Activated naive CD4-positive, alpha-beta T cell treated with anti-CD3 and anti-CD28 coated beads for 36 hours (primary cell): ENCODE measurements at regions of chr10 and their contacts with region 1.

Region 1: GRCh38 chr10:4651404-4652037 is 174.5 kb upstream of the AKR1E2 start:
- DNase-seq: peak; percentile 41
- H3K4me3 Mint-ChIP-seq: peak overlapping the region; percentile 10
- H3K27ac Mint-ChIP-seq: peak overlapping the region; percentile 84
- H3K4me1 Mint-ChIP-seq: peaks cover 43% of the 10 kb centered on the region
- H3K27me3 Mint-ChIP-seq: no peaks in the 10 kb centered on the region

Region 2: DNA sequence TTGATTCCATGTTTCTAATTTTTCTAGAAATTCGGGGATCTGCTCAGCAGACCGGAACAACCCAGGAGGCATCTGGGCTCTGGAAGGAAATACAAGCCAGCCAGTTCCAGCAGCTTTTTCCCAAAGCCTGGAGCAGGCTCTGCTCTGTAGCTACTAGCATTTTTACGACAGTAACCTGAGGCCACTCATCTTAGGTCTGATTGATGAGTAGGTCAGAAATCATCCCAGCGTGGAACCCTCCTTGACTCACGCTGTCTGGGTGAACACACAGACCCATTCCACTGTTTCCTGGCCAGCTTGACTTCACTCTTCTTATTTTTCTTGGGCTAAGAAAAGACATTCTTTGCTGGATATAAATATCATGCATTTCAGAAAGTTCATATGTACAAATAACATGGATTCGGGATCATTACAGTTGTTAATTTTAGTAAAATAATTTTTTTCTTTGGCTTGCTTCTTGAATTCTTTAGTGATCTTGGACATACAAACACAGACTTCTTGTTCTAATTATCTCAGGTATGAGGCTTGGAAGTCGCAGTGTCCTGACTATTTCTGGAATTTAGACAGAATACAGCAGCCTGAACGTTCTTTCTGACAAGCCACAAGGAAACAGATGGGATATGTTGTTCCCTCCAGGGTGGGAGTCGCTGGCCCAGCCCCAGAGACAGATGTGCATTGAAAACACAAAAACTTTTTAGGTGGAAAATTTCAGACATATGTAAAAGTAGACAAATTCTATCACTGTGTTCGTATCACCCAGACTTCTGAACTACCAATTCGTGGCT is 1424.4 kb before region 1 on chr10:
- CTCF ChIA-PET with region 1: no interaction called
- intact Hi-C with region 1: loop called (anchors 2 kb)
- DNase-seq: no peak
- H3K4me3 Mint-ChIP-seq: no peak overlapping the region
- H3K27ac Mint-ChIP-seq: no peak overlapping the region
- H3K4me1 Mint-ChIP-seq: peaks cover 22% of the 10 kb centered on the region
- H3K27me3 Mint-ChIP-seq: peaks cover 2% of the 10 kb centered on the region

Region 3: GRCh38 chr10:3805791-3806461 is 845.6 kb before region 1 on chr10:
- CTCF ChIA-PET with region 1: no interaction called
- intact Hi-C with region 1: loop called (anchors 2 kb)
- DNase-seq: peak; percentile 45
- H3K4me3 Mint-ChIP-seq: peak overlapping the region; percentile 10
- H3K27ac Mint-ChIP-seq: no peak overlapping the region
- H3K4me1 Mint-ChIP-seq: peaks cover 73% of the 10 kb centered on the region
- H3K27me3 Mint-ChIP-seq: no peaks in the 10 kb centered on the region

Region 4: DNA sequence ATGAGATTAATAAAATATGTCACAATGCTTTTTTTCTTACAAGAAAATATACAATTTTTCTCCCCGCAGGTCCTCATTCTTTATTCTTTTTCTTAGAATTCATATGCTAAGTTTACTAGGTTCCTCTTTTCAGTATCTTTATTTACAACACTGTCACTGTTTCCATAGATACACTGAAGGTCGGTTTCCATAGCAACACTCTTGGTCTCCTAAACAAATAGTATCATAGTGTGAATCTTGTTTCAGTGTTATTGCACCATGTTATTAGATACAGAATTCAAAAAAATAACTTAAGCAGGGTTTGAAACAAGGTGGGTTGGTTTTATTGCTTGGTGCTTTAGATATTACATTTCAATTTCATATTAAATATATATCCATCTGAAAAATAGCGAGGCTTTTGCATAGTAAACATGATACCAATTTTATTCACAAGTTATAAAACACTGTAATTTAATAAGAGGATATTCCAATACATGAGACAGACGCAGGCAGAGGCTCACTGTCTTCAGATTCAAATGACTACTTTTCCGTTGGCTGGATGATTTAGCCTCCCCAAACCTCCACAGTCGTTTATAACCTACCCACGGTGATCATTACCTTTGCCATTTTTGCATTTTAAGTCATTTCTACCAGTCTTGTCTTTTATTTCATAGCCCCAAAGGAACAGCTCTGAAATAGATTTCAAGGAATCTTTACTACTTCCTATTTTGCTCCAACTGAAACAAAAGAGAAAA is 777.6 kb before region 1 on chr10:
- CTCF ChIA-PET with region 1: no interaction called
- intact Hi-C with region 1: loop called (anchors 2 kb)
- DNase-seq: no peak
- H3K4me3 Mint-ChIP-seq: no peak overlapping the region
- H3K27ac Mint-ChIP-seq: peak overlapping the region; percentile 36
- H3K4me1 Mint-ChIP-seq: peaks cover 52% of the 10 kb centered on the region
- H3K27me3 Mint-ChIP-seq: no peaks in the 10 kb centered on the region

Region 5: GRCh38 chr10:4686644-4686996 is 35.1 kb after region 1 on chr10:
- CTCF ChIA-PET with region 1: interaction called, 5 read pairs
- intact Hi-C with region 1: loop called (anchors 2 kb)
- DNase-seq: peak; percentile 44
- H3K4me3 Mint-ChIP-seq: no peak overlapping the region
- H3K27ac Mint-ChIP-seq: peak overlapping the region; percentile 40
- H3K4me1 Mint-ChIP-seq: peaks cover 43% of the 10 kb centered on the region
- H3K27me3 Mint-ChIP-seq: peaks cover 9% of the 10 kb centered on the region